HepG2 (cell line): ENCODE measurements at regions of chrX and their contacts with region 1.

Region 1: GRCh38 chrX:2928191-2928763 is 862 bp downstream of the ARSD start:
- DNase-seq: peak; percentile 55
- ATAC-seq: peak; percentile 62
- H3K4me3 ChIP-seq: peak overlapping the region; percentile 59 to 73 (median 71); a peak in 5 of 6 replicates
- H3K27ac ChIP-seq: peak overlapping the region; percentile 99
- H3K4me1 ChIP-seq: no peaks in the 10 kb centered on the region
- H3K27me3 ChIP-seq: no peaks in the 10 kb centered on the region
- CTCF ChIP-seq: no peak
- EP300 ChIP-seq: no peak
- POLR2A ChIP-seq: no peak
- RAD21 ChIP-seq: no peak

Region 2: GRCh38 chrX:2875798-2876399 is 52.4 kb before region 1 on chrX:
- CTCF ChIA-PET with region 1: no interaction called
- POLR2A ChIA-PET with region 1: no interaction called
- in situ Hi-C with region 1: no loop called
- intact Hi-C with region 1: no loop called
- DNase-seq: peak; percentile 18
- ATAC-seq: peak; percentile 73
- H3K4me3 ChIP-seq: no peak overlapping the region
- H3K27ac ChIP-seq: no peak overlapping the region
- H3K4me1 ChIP-seq: no peaks in the 10 kb centered on the region
- H3K27me3 ChIP-seq: no peaks in the 10 kb centered on the region
- CTCF ChIP-seq: 0 out of 2 replicates have a peak, but pooled peaks have one; percentile 17
- EP300 ChIP-seq: no peak
- POLR2A ChIP-seq: no peak
- RAD21 ChIP-seq: no peak

Region 3: GRCh38 chrX:2898846-2899512 is 29.3 kb before region 1 on chrX:
- CTCF ChIA-PET with region 1: no interaction called
- POLR2A ChIA-PET with region 1: interaction called, 16 read pairs
- in situ Hi-C with region 1: no loop called
- intact Hi-C with region 1: loop called (anchors 1 kb)
- DNase-seq: peak; percentile 24
- ATAC-seq: peak; percentile 26
- H3K4me3 ChIP-seq: peak overlapping the region; percentile 52 to 68 (median 63); a peak in 5 of 6 replicates
- H3K27ac ChIP-seq: peak overlapping the region; percentile 93
- H3K4me1 ChIP-seq: peaks cover 17% of the 10 kb centered on the region
- H3K27me3 ChIP-seq: no peaks in the 10 kb centered on the region
- CTCF ChIP-seq: no peak
- EP300 ChIP-seq: no peak
- POLR2A ChIP-seq: no peak
- RAD21 ChIP-seq: no peak

Region 4: GRCh38 chrX:2962346-2962745 is 34.1 kb after region 1 on chrX:
- CTCF ChIA-PET with region 1: no interaction called
- POLR2A ChIA-PET with region 1: interaction called, 28 read pairs
- in situ Hi-C with region 1: no loop called
- intact Hi-C with region 1: loop called (anchors 2 kb)
- DNase-seq: peak; percentile 3
- ATAC-seq: peak; percentile 77
- H3K4me3 ChIP-seq: peak overlapping the region; percentile 65 to 70 (median 70); a peak in 5 of 6 replicates
- H3K27ac ChIP-seq: peak overlapping the region; percentile 22
- H3K4me1 ChIP-seq: peaks cover 24% of the 10 kb centered on the region
- H3K27me3 ChIP-seq: no peaks in the 10 kb centered on the region
- CTCF ChIP-seq: no peak
- EP300 ChIP-seq: no peak
- POLR2A ChIP-seq: no peak
- RAD21 ChIP-seq: no peak

Region 5: GRCh38 chrX:2967998-2968909 is 40.0 kb after region 1 on chrX:
- CTCF ChIA-PET with region 1: no interaction called
- POLR2A ChIA-PET with region 1: interaction called, 28 read pairs
- in situ Hi-C with region 1: no loop called
- intact Hi-C with region 1: loop called (anchors 2 kb)
- DNase-seq: no peak
- ATAC-seq: no peak
- H3K4me3 ChIP-seq: no peak overlapping the region
- H3K27ac ChIP-seq: no peak overlapping the region
- H3K4me1 ChIP-seq: 0 out of 2 replicates have a peak, but pooled peaks cover 6% of the 10 kb centered on the region
- H3K27me3 ChIP-seq: no peaks in the 10 kb centered on the region
- CTCF ChIP-seq: no peak
- EP300 ChIP-seq: no peak
- POLR2A ChIP-seq: no peak
- RAD21 ChIP-seq: no peak